ENCODE measurements at regions of chr5 and their contacts with region 1.

Region 1: GRCh38 chr5:163347671-163348070 is 89.7 kb upstream of the CCNG1 start:
- DNase-seq: peak; percentile 81
- H3K4me3 ChIP-seq: no peak overlapping the region
- H3K27ac ChIP-seq: peak overlapping the region; percentile 37
- H3K4me1 ChIP-seq: peaks cover 7% of the 10 kb centered on the region
- H3K27me3 ChIP-seq: no peaks in the 10 kb centered on the region
- CTCF ChIP-seq: peak; percentile 82

Region 2: DNA sequence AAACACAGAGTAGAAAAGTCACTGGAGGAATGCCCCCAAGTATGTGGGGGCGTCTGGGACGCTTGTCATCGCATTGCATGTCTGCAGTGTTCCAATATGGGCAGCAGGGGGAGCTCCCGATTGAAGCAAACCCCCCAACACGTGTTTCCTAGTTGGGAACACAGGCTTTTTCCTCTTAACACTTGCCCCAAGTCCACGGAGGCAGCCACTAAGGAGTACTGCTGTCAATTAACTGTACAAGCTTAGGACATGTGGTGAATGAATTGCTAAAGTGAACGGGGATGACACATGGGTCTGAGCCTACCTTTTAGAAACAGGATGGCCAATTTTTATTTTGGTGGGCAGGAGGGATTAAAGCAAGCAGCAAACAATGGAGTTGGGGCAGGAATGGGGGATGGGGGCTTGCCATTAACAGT is 1803.3 kb before region 1 on chr5:
- CTCF ChIA-PET with region 1: no interaction called
- POLR2A ChIA-PET with region 1: no interaction called
- intact Hi-C with region 1: loop called (anchors 1 kb)
- DNase-seq: peak; percentile 52
- H3K4me3 ChIP-seq: no peak overlapping the region
- H3K27ac ChIP-seq: no peak overlapping the region
- H3K4me1 ChIP-seq: peaks cover 10% of the 10 kb centered on the region
- H3K27me3 ChIP-seq: peaks cover 43% of the 10 kb centered on the region
- CTCF ChIP-seq: peak; percentile 75

Region 3: DNA sequence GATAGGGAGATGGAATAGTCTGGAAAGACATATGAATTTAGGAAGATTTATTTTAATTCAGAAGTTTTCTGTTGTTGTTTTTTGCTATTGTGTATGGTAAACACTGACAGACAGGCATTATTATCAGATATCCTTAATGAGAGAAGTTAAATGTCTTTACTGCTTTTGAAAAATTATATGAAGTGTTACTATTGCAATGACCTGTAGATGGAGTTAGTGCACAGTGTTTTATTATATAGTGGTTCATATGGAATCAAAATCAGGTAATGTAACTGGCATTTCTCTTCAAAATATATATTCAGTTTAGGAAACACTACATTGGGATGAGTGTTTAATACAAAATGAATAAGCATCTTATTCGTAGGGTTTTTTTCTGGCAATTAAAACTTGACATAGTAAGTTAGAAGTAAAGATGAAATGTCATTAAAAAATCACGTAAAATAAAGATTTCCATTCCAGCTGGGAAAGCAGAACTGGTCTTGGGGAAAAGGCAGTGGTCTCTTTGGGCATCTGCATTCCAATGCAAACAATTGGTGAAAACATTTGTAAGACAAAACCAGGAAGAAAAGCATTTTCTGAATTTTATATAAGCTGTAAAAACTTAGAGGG is 1495.9 kb before region 1 on chr5:
- CTCF ChIA-PET with region 1: no interaction called
- POLR2A ChIA-PET with region 1: no interaction called
- intact Hi-C with region 1: loop called (anchors 5 kb)
- DNase-seq: no peak
- H3K4me3 ChIP-seq: no peak overlapping the region
- H3K27ac ChIP-seq: no peak overlapping the region
- H3K4me1 ChIP-seq: peaks cover 3% of the 10 kb centered on the region
- H3K27me3 ChIP-seq: peaks cover 54% of the 10 kb centered on the region
- CTCF ChIP-seq: peak; percentile 56

Region 4: DNA sequence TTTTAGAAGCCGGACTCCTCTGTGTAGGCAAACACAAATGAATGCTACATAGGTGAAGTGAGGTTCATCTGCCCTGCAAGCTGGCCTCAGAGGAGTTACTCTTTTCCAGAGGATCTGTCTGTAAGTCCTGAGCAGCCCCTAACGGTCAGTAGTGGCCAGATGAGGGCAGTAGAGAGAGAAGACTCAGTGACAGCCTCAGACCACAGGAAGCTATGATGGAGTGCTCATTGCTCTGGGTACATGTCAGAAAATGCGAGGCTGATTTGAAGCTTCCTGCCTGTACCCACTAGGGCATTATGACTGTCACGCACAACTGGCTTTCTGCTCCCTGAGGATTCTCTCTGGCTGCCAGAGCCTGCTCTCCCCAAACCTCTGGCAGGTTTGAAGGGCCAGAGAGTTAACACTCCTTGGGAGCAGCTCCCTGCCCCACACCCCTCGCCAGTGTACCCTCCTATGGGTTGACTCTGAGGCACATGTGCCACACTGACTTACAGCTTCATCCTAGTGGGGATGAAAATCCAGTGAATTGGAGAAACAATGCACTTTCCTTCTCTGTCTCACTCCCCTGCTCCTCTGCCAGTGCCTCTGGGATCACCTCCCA is 1138.6 kb before region 1 on chr5:
- CTCF ChIA-PET with region 1: no interaction called
- POLR2A ChIA-PET with region 1: no interaction called
- intact Hi-C with region 1: loop called (anchors 5 kb)
- DNase-seq: peak; percentile 66
- H3K4me3 ChIP-seq: no peak overlapping the region
- H3K27ac ChIP-seq: no peak overlapping the region
- H3K4me1 ChIP-seq: no peaks in the 10 kb centered on the region
- H3K27me3 ChIP-seq: no peaks in the 10 kb centered on the region
- CTCF ChIP-seq: peak; percentile 54

Region 5: GRCh38 chr5:163221581-163221980 is 126.1 kb before region 1 on chr5:
- CTCF ChIA-PET with region 1: interaction called, 6 read pairs
- POLR2A ChIA-PET with region 1: no interaction called
- intact Hi-C with region 1: loop called (anchors 5 kb)
- DNase-seq: peak; percentile 89
- H3K4me3 ChIP-seq: no peak overlapping the region
- H3K27ac ChIP-seq: peak overlapping the region; percentile 93
- H3K4me1 ChIP-seq: peaks cover 59% of the 10 kb centered on the region
- H3K27me3 ChIP-seq: no peaks in the 10 kb centered on the region
- CTCF ChIP-seq: no peak